ENCODE measurements at regions of chr15 and their contacts with region 1.

Region 1: GRCh38 chr15:71103102-71103676 is 12.1 kb upstream of the THSD4 start:
- DNase-seq: peak in 1 of 2 experiments; percentile 41
- H3K4me3 ChIP-seq: no peak overlapping the region
- H3K4me3 Mint-ChIP-seq: no peak overlapping the region
- H3K27ac Mint-ChIP-seq: no peak overlapping the region
- H3K4me1 ChIP-seq: no peaks in the 10 kb centered on the region
- H3K4me1 Mint-ChIP-seq: no peaks in the 10 kb centered on the region
- H3K27me3 ChIP-seq: no peaks in the 10 kb centered on the region
- H3K27me3 Mint-ChIP-seq: peaks cover 13% of the 10 kb centered on the region
- CTCF ChIP-seq: peak; percentile 53 to 64

Region 2: DNA sequence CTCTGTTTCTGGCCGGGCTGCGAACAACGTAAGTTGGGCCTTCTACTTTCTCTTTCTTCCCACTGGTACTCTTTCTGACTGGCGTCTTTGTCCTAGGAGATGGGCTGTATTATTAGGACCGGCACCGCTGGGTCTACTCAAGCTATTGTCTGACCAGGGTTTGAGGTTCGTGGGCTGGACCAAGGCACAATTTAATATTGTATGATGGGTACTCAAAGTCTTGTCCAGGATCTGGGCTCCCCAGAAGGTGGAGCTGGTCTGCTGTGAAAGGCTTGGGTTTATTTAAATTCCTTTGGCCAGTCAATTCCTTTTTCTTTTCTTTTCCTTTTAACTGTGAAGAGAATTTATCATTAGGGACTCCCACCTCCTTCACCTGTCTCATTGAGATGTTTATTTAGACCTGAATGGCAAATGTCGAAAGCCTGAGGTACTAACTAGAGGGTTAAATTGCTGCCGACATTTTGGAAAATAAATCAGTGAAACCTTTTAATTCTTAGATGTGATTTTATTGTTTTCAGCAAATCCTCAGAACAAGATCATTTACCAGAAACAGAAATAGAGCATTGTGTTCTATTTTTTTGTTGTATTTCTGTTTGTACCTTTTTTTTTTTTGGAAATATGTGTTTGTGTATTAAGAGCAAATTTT is 210.2 kb before region 1 on chr15:
- CTCF ChIA-PET with region 1: no interaction called
- POLR2A ChIA-PET with region 1: no interaction called
- intact Hi-C with region 1: loop called (anchors 1 kb)
- DNase-seq: peak; percentile 40 to 42
- H3K4me3 ChIP-seq: peak overlapping the region; percentile 80
- H3K4me3 Mint-ChIP-seq: peak overlapping the region; percentile 92
- H3K27ac Mint-ChIP-seq: peak overlapping the region; percentile 93
- H3K4me1 ChIP-seq: no peaks in the 10 kb centered on the region; the same call in 1 of the 2 replicates
- H3K4me1 Mint-ChIP-seq: peaks cover 12% of the 10 kb centered on the region
- H3K27me3 ChIP-seq: no peaks in the 10 kb centered on the region
- H3K27me3 Mint-ChIP-seq: no peaks in the 10 kb centered on the region
- CTCF ChIP-seq: peak; percentile 11 to 47

Region 3: GRCh38 chr15:71011503-71012155 is 91.6 kb before region 1 on chr15:
- CTCF ChIA-PET with region 1: no interaction called
- POLR2A ChIA-PET with region 1: no interaction called
- intact Hi-C with region 1: loop called (anchors 1 kb)
- DNase-seq: peak in 1 of 2 experiments; percentile 11
- H3K4me3 ChIP-seq: no peak overlapping the region
- H3K4me3 Mint-ChIP-seq: no peak overlapping the region
- H3K27ac Mint-ChIP-seq: no peak overlapping the region
- H3K4me1 ChIP-seq: no peaks in the 10 kb centered on the region
- H3K4me1 Mint-ChIP-seq: no peaks in the 10 kb centered on the region
- H3K27me3 ChIP-seq: no peaks in the 10 kb centered on the region
- H3K27me3 Mint-ChIP-seq: no peaks in the 10 kb centered on the region
- CTCF ChIP-seq: peak; percentile 26 to 69

Region 4: DNA sequence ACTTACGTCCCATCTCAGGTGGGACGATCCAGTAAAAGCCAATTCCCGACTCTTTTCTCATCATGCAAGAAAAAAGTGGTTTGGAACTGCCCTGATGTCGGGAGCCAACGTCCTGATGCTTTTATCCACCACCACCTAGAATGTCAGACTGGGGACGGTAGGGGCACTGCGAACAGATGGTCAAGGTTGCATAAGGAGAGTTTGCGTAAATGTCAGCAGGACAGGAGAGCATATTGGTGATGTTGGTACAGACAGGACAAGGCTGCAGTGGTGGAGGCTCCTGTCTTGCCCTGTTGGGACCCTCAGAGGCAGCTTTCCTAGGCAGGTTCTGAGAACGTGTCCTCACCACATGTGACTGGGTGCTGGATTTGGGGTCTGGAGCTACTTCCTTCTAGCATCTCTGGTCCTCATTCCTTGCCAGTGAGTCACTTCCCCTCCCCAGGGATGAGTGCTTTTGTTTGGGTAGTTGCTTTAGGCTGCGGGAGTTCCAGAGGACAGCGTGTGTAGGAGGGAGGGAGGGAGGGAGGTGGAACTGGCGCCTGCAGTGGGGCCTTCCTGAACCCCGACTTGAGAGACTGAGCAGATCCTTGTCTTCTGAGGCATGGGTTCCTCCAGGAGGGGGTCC is 33.1 kb after region 1 on chr15:
- CTCF ChIA-PET with region 1: no interaction called
- POLR2A ChIA-PET with region 1: no interaction called
- intact Hi-C with region 1: no loop called
- DNase-seq: no peak
- H3K4me3 ChIP-seq: no peak overlapping the region
- H3K4me3 Mint-ChIP-seq: no peak overlapping the region
- H3K27ac Mint-ChIP-seq: no peak overlapping the region
- H3K4me1 ChIP-seq: no peaks in the 10 kb centered on the region
- H3K4me1 Mint-ChIP-seq: no peaks in the 10 kb centered on the region
- H3K27me3 ChIP-seq: no peaks in the 10 kb centered on the region
- H3K27me3 Mint-ChIP-seq: peaks cover 10% of the 10 kb centered on the region
- CTCF ChIP-seq: no peak

Measured in Caco-2 (cell line).